ENCODE measurements at regions of chr2 and their contacts with region 1.

Region 1: GRCh38 chr2:168336864-168337263 is 89.5 kb upstream of the STK39 start:
- DNase-seq: peak; percentile 78
- H3K4me3 ChIP-seq: no peak overlapping the region
- H3K27ac ChIP-seq: no peak overlapping the region
- H3K4me1 ChIP-seq: peaks cover 0 to 12% (median 1%) of the 10 kb centered on the region in 4 donors
- H3K27me3 ChIP-seq: no peaks in the 10 kb centered on the region
- CTCF ChIP-seq: peak; percentile 30 to 79 (median 53)
- EP300 ChIP-seq: no peak
- POLR2A ChIP-seq: no peak

Region 2: DNA sequence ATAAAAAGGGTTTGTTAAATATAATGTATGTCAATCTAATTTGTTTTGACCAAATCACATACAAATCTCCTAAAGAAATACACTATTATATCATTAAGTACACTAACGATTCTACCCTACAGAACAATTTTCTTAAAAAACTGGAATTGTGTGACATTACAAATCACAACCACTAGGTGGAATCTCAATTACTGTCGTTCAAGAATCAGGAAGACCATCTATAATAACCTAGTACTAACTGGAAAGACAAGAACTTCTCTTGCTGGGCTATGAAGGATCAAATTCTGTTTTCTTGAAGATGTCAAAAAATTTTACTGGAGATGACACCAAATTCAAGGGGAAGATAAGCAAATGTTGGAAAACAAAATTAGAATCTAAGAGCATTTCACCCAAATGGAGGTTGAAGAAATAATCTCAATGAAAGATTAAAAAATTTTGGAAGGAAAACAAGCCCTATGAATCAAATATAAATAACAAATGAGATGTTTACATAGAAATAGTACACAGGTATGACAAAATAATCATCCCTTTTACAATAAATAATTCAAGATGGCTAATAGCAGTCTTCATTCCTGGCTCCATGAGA is 200.4 kb before region 1 on chr2:
- in situ Hi-C with region 1: loop called in 1 of 4 experiments (anchors 10 kb)
- intact Hi-C with region 1: no loop called
- DNase-seq: no peak
- H3K4me3 ChIP-seq: no peak overlapping the region
- H3K27ac ChIP-seq: no peak overlapping the region
- H3K4me1 ChIP-seq: peaks cover 0 to 13% (median 0%) of the 10 kb centered on the region in 4 donors
- H3K27me3 ChIP-seq: no peaks in the 10 kb centered on the region
- CTCF ChIP-seq: peak; percentile 56 to 77 (median 65)
- EP300 ChIP-seq: no peak
- POLR2A ChIP-seq: no peak

Region 3: GRCh38 chr2:168160897-168161296 is 176.0 kb before region 1 on chr2:
- in situ Hi-C with region 1: loop called in 1 of 4 experiments (anchors 10 kb)
- intact Hi-C with region 1: no loop called
- DNase-seq: no peak
- H3K4me3 ChIP-seq: no peak overlapping the region
- H3K27ac ChIP-seq: no peak overlapping the region
- H3K4me1 ChIP-seq: peaks cover 0 to 11% (median 3%) of the 10 kb centered on the region in 4 donors
- H3K27me3 ChIP-seq: no peaks in the 10 kb centered on the region
- CTCF ChIP-seq: peak in 3 of 5 experiments; percentile 5 to 27 (median 17)
- EP300 ChIP-seq: no peak
- POLR2A ChIP-seq: no peak

Region 4: DNA sequence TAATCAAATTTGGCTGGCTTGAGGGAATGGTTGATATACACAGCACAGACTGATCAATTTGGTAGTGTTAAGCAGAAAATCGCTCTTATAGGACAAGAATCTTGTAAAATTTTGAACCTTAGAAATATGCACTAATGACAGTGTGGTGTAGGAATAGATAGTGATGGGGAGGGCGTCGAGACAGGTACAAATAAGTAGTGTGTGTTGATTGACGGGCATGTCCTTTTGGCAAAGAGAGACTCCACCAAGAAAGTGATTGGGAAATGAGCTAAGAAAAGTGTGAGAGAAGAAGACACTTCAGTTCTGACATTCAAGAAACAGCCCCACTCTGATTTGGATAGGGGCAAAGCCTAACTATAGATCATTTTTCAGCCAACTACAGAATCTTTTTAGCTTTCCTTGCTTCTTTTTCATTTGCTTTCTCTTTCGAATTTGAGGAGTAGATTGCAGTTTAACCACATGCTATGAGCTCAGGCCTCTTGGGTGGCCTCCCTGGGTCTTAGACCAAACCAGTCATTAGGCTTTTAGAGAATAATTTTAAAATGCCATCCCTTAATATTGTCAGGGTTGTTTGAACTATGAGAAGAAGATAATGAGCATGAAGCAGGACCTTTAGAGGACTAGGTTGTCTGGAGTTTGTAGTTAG is 246.3 kb after region 1 on chr2:
- in situ Hi-C with region 1: no loop called
- intact Hi-C with region 1: no loop called
- DNase-seq: no peak
- H3K4me3 ChIP-seq: no peak overlapping the region
- H3K27ac ChIP-seq: peak overlapping the region in 3 of 4 donors; percentile 14 to 39 (median 32)
- H3K4me1 ChIP-seq: peaks cover 0 to 36% (median 16%) of the 10 kb centered on the region in 4 donors
- H3K27me3 ChIP-seq: no peaks in the 10 kb centered on the region
- CTCF ChIP-seq: no peak
- EP300 ChIP-seq: no peak
- POLR2A ChIP-seq: no peak

Region 5: GRCh38 chr2:168758970-168759820 is 422.3 kb after region 1 on chr2:
- in situ Hi-C with region 1: loop called in 2 of 4 experiments (anchors 5 to 25 kb)
- intact Hi-C with region 1: no loop called
- DNase-seq: no peak
- H3K4me3 ChIP-seq: no peak overlapping the region
- H3K27ac ChIP-seq: no peak overlapping the region
- H3K4me1 ChIP-seq: peaks cover 0 to 20% (median 6%) of the 10 kb centered on the region in 4 donors
- H3K27me3 ChIP-seq: no peaks in the 10 kb centered on the region
- CTCF ChIP-seq: peak; percentile 48 to 71 (median 60)
- EP300 ChIP-seq: no peak
- POLR2A ChIP-seq: no peak

Region 6: GRCh38 chr2:170177950-170178781 is 1841.3 kb after region 1 on chr2 and contains the start of gene MYO3B:
- in situ Hi-C with region 1: no loop called
- intact Hi-C with region 1: no loop called
- DNase-seq: no peak
- H3K4me3 ChIP-seq: no peak within 1 kb of the TSS
- H3K27ac ChIP-seq: no peak within 1 kb of the TSS
- H3K4me1 ChIP-seq: no peaks in the 10 kb centered on the region
- H3K27me3 ChIP-seq: no peaks in the 10 kb centered on the region
- CTCF ChIP-seq: no peak
- EP300 ChIP-seq: no peak
- POLR2A ChIP-seq: no peak
- total RNA-seq, gene MYO3B: 0.48 TPM in 1 of 4 donors, not detected in the others

Measured in transverse colon (tissue), 4 donors.